Activated T-helper 1 cell treated with anti-CD3 and anti-CD28 coated beads, Interleukin-12 subunit alpha, Interleukin-12 subunit beta, Interleukin-2, Interleukin-4 antibody, amounts not matched to agents 30 ng/mL and 10 ng/mL and 1 ng/mL, durations not matched to agents 14 hours and 24 hours and 36 hours (primary cell): ENCODE measurements at regions of chr11 and their contacts with region 1.

Region 1: DNA sequence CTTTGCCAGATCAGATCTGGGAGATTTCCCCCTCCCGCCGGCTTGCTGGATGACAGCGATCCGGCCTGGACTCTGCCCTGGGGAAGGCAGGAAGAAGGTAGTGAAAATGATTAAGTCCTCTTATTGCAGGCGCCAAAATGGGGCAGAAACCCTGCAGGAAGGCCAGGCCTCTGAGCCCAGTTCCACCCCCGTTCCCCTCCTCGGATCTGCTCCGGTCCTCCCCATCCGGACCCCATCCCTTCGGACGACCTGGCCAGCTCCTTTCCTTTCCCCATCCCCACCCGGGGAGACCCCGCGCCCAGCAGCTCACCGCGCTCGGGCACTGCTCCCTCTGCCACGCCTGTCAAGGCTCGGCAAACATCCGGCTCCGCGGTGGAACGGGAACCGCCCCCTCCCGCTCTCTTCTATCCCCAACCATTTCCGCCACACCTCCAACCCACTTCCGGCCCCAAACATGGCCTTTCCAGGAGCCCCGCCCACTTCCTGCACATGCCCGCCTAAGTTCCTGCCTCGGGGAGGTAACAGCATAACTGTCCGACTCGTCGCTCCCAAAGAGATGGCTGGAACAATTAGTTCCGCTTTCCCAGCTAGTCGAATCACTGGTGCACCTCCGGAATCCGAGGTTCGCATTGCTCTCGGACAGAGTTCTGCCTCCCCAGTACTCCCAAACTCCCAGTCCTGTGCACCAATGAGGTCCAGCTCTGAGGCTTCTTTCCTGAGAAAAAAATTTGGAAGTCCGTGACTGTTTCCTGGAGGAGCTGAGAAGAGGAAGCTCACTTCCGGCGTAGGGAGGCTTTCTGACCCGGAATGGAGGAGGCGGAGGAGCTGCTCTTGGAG is at the starts of genes ARHGAP1 and ZNF408:
- DNase-seq: peak; percentile 98
- H3K4me3 Mint-ChIP-seq: peak within 1 kb of the TSS; percentile 99
- H3K27ac Mint-ChIP-seq: peak within 1 kb of the TSS; percentile 95
- H3K4me1 Mint-ChIP-seq: peaks cover 48% of the 10 kb centered on the region
- H3K27me3 Mint-ChIP-seq: peaks cover 2% of the 10 kb centered on the region
- total RNA-seq, gene ARHGAP1: 69.8 and 71.7 TPM in 2 replicates
- total RNA-seq, gene ZNF408: 12.9 and 13.9 TPM in 2 replicates

Region 2: GRCh38 chr11:46346886-46347636 is 353.4 kb before region 1 on chr11 and contains the start of gene DGKZ:
- intact Hi-C with region 1: loop called (anchors 2 kb)
- DNase-seq: peak; percentile 91
- H3K4me3 Mint-ChIP-seq: peak within 1 kb of the TSS; percentile 88
- H3K27ac Mint-ChIP-seq: peak within 1 kb of the TSS; percentile 89
- H3K4me1 Mint-ChIP-seq: peaks cover 72% of the 10 kb centered on the region
- H3K27me3 Mint-ChIP-seq: peaks cover 3% of the 10 kb centered on the region
- total RNA-seq, gene DGKZ: 101 TPM in 2 replicates

Region 3: GRCh38 chr11:46593550-46594373 is 106.7 kb before region 1 on chr11 and contains the start of gene AMBRA1:
- intact Hi-C with region 1: loop called (anchors 1 kb)
- DNase-seq: peak; percentile 81
- H3K4me3 Mint-ChIP-seq: peak within 1 kb of the TSS; percentile 93
- H3K27ac Mint-ChIP-seq: peak within 1 kb of the TSS; percentile 87
- H3K4me1 Mint-ChIP-seq: peaks cover 44% of the 10 kb centered on the region
- H3K27me3 Mint-ChIP-seq: no peaks in the 10 kb centered on the region
- total RNA-seq, gene AMBRA1: 35.7 and 37.9 TPM in 2 replicates

Region 4: GRCh38 chr11:46603704-46604308 is 96.7 kb before region 1 on chr11:
- intact Hi-C with region 1: no loop called
- DNase-seq: no peak
- H3K4me3 Mint-ChIP-seq: no peak overlapping the region
- H3K27ac Mint-ChIP-seq: no peak overlapping the region
- H3K4me1 Mint-ChIP-seq: no peaks in the 10 kb centered on the region
- H3K27me3 Mint-ChIP-seq: no peaks in the 10 kb centered on the region

Region 5: GRCh38 chr11:46845740-46846509 is 145.5 kb after region 1 on chr11 and contains the start of gene CKAP5:
- intact Hi-C with region 1: loop called (anchors 1 kb)
- DNase-seq: peak; percentile 87
- H3K4me3 Mint-ChIP-seq: peak within 1 kb of the TSS; percentile 98
- H3K27ac Mint-ChIP-seq: peak within 1 kb of the TSS; percentile 98
- H3K4me1 Mint-ChIP-seq: peaks cover 41% of the 10 kb centered on the region
- H3K27me3 Mint-ChIP-seq: peaks cover 4% of the 10 kb centered on the region
- total RNA-seq, gene CKAP5: 121 TPM in 2 replicates

Region 6: DNA sequence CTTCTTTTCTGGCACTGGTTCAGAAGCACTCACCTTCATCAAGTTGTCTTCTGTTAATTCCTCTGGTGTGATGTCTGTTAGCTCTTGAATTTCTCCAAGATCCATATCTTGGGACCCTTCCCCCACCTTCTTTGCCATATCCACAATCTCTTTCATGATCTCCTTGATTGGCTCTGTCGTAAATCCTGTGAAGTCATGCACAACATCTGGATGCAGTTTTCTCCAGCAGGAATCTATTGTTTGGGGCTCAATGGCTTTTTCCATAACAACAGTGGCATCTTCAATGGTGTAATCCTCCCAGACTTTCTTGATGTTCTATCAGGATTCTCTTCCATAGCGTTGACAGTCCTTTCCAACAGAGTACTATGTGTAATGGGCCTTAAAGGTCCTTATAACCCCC is 333.0 kb after region 1 on chr11:
- intact Hi-C with region 1: no loop called
- DNase-seq: no peak
- H3K4me3 Mint-ChIP-seq: no peak overlapping the region
- H3K27ac Mint-ChIP-seq: no peak overlapping the region
- H3K4me1 Mint-ChIP-seq: no peaks in the 10 kb centered on the region
- H3K27me3 Mint-ChIP-seq: no peaks in the 10 kb centered on the region

Region 7: GRCh38 chr11:47176328-47177228 is 476.1 kb after region 1 on chr11 and contains the start of gene ARFGAP2:
- intact Hi-C with region 1: loop called (anchors 2 kb)
- DNase-seq: peak; percentile 96
- H3K4me3 Mint-ChIP-seq: peak within 1 kb of the TSS; percentile 97
- H3K27ac Mint-ChIP-seq: peak within 1 kb of the TSS; percentile 100
- H3K4me1 Mint-ChIP-seq: peaks cover 36% of the 10 kb centered on the region
- H3K27me3 Mint-ChIP-seq: no peaks in the 10 kb centered on the region
- total RNA-seq, gene ARFGAP2: 111 and 116 TPM in 2 replicates

Region 8: GRCh38 chr11:47407746-47408590 is 707.5 kb after region 1 on chr11 and contains the start of gene SLC39A13:
- intact Hi-C with region 1: loop called (anchors 2 kb)
- DNase-seq: peak; percentile 93
- H3K4me3 Mint-ChIP-seq: peak within 1 kb of the TSS; percentile 94
- H3K27ac Mint-ChIP-seq: peak within 1 kb of the TSS; percentile 92
- H3K4me1 Mint-ChIP-seq: peaks cover 21% of the 10 kb centered on the region
- H3K27me3 Mint-ChIP-seq: no peaks in the 10 kb centered on the region
- total RNA-seq, gene SLC39A13: 15.5 and 16.2 TPM in 2 replicates